ENCODE measurements at regions of chr2 and their contacts with region 1.

Region 1: DNA sequence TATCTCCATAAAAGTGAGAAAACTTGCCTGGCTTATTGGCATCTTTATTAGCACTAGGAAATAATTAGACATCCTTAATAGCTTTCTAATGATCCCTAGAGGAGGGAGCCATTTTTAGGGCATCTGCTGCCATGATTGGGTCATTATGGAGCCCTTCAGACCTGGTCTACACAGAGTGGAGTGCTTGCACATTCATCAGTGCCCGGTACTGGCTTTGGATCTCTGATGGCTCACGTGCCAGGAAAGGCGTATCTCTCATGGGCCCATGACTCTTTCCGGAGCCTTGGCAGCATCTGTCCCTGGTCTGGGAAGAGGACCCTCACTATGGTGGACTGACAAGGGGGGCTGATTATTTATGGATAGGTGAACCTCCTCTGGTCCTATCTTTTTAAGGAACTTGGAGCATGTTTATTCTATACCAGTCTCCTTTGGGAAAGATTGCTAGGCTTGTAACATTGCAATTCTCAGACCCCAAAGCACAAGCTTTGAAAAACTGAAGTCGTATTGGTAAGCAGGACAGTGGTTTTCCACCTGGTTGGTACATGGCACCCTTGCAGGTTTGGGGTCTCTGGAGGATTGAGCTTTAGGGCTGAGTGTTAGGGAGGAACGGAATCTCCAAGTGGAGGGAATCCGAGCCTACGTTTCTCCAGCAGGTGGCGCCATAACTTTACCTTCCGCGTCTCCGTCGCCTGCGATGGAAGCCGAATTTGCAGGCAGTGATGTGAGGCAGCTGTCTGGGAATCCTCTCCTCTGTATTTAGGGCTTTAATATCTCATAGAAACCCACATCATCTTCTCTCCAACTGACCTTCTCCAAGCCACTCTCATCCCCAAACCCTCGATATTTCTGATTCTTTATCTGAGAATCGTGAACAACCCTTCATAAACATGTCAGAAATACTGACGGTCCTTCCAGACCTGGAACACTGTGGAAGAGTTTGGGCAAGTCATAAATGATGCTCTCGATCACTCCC is 27.8 kb downstream of the SIX2 start:
- DNase-seq: peak; percentile 62 to 76
- H3K4me3 ChIP-seq: no peak overlapping the region
- H3K27ac ChIP-seq: no peak overlapping the region
- H3K4me1 ChIP-seq: no peaks in the 10 kb centered on the region
- H3K27me3 ChIP-seq: no peaks in the 10 kb centered on the region
- CTCF ChIP-seq: peak; percentile 96

Region 2: DNA sequence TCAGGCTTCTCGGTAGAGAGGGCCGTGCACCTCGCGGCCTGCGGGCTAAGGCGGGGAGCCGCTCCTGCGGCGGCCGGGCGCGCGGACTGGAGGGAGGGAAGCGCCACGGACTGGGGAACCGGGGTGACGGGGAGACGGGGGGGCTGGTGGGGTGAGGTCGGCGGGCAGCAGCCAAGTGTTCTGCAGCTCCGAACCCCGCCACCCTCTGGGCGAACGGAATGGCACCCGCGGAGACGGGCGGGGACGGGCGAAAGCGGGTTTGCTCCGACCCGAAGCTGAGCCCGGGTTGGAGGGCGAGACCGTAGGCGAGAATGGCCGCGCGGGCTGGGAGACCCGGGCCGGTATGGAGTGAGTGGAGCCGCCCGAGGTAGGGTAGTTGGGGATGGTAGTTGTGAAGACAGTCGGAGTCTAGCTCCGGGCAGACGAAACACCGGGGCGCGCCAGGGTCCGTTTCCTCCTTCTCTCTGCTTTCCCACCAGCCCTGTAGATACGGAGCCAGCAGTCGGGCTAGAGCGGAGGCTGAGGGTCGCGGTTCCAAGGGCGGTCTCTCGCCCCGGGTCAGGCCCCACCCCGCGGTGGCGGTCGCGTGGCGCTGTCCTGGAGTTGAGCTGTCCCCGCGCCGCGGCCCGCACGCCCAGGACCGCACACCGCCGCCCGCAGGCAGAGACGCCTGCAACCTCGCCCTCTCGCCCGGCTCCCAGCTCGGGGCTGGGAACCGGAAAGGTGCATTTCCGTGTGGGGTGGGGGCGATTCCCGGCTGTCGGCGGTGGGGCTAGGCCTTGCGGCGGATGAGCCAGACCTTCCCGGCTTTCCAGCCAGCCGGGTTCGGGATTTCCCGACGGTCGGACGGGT is 188.1 kb after region 1 on chr2:
- CTCF ChIA-PET with region 1: interaction called, 5 read pairs
- POLR2A ChIA-PET with region 1: no interaction called
- intact Hi-C with region 1: loop called (anchors 2 kb)
- DNase-seq: peak in 1 of 2 experiments; percentile 56
- H3K4me3 ChIP-seq: peak overlapping the region; percentile 79
- H3K27ac ChIP-seq: peak overlapping the region; percentile 57
- H3K4me1 ChIP-seq: peaks cover 57% of the 10 kb centered on the region
- H3K27me3 ChIP-seq: no peaks in the 10 kb centered on the region
- CTCF ChIP-seq: 0 out of 2 replicates have a peak, but pooled peaks have one; percentile 19

Region 3: GRCh38 chr2:45439788-45440773 is 458.7 kb after region 1 on chr2:
- CTCF ChIA-PET with region 1: interaction called, 3 read pairs
- POLR2A ChIA-PET with region 1: no interaction called
- intact Hi-C with region 1: loop called (anchors 1 kb)
- DNase-seq: no peak
- H3K4me3 ChIP-seq: no peak overlapping the region
- H3K27ac ChIP-seq: no peak overlapping the region
- H3K4me1 ChIP-seq: no peaks in the 10 kb centered on the region
- H3K27me3 ChIP-seq: no peaks in the 10 kb centered on the region
- CTCF ChIP-seq: peak; percentile 33; the same call in 1 of the 2 replicates

Region 4: GRCh38 chr2:45578056-45578809 is 596.8 kb after region 1 on chr2:
- CTCF ChIA-PET with region 1: no interaction called
- POLR2A ChIA-PET with region 1: no interaction called
- intact Hi-C with region 1: loop called (anchors 1 kb)
- DNase-seq: no peak
- H3K4me3 ChIP-seq: no peak overlapping the region
- H3K27ac ChIP-seq: no peak overlapping the region
- H3K4me1 ChIP-seq: no peaks in the 10 kb centered on the region
- H3K27me3 ChIP-seq: no peaks in the 10 kb centered on the region
- CTCF ChIP-seq: peak; percentile 57

Measured in PC-9 (cell line).